AG04449 (cell line): ENCODE measurements at regions of chr5 and their contacts with region 1.

Region 1: GRCh38 chr5:169548315-169548714 is 35.3 kb upstream of the SPDL1 start:
- DNase-seq: no peak
- H3K4me3 ChIP-seq: no peak overlapping the region
- CTCF ChIP-seq: peak; percentile 32

Region 2: GRCh38 chr5:168706655-168707069 is 841.7 kb before region 1 on chr5:
- CTCF ChIA-PET with region 1: interaction called, 27 read pairs
- POLR2A ChIA-PET with region 1: no interaction called
- DNase-seq: no peak
- H3K4me3 ChIP-seq: no peak overlapping the region
- CTCF ChIP-seq: peak; percentile 79

Region 3: GRCh38 chr5:169561893-169562292 is 13.6 kb after region 1 on chr5:
- CTCF ChIA-PET with region 1: interaction called, 10 read pairs
- POLR2A ChIA-PET with region 1: no interaction called
- DNase-seq: no peak
- H3K4me3 ChIP-seq: no peak overlapping the region
- CTCF ChIP-seq: no peak